SK-N-SH (cell line): ENCODE measurements at regions of chr20 and their contacts with region 1.

Region 1: GRCh38 chr20:35463455-35464300 is 8.3 kb downstream of the CEP250 start:
- DNase-seq: peak; percentile 65
- H3K4me3 ChIP-seq: no peak overlapping the region; a peak in 1 of 4 replicates
- H3K27ac ChIP-seq: no peak overlapping the region
- H3K4me1 ChIP-seq: peaks cover 0 to under 1% of the 10 kb centered on the region in 2 experiments; a peak in 3 of 4 replicates
- H3K27me3 ChIP-seq: no peaks in the 10 kb centered on the region
- CTCF ChIP-seq: peak; percentile 82
- EP300 ChIP-seq: no peak
- RAD21 ChIP-seq: peak; percentile 81

Region 2: GRCh38 chr20:35447082-35447789 is 16.4 kb before region 1 on chr20:
- CTCF ChIA-PET with region 1: interaction called, 31 read pairs
- POLR2A ChIA-PET with region 1: no interaction called
- DNase-seq: peak; percentile 74
- H3K4me3 ChIP-seq: peak overlapping the region in 1 of 2 experiments; percentile 44; a peak in 1 of 4 replicates
- H3K27ac ChIP-seq: no peak overlapping the region
- H3K4me1 ChIP-seq: peaks cover 4 to 11% of the 10 kb centered on the region in 2 experiments; a peak in 3 of 4 replicates
- H3K27me3 ChIP-seq: no peaks in the 10 kb centered on the region
- CTCF ChIP-seq: peak; percentile 92
- EP300 ChIP-seq: no peak
- RAD21 ChIP-seq: peak; percentile 69

Region 3: GRCh38 chr20:35474303-35474871 is 10.7 kb after region 1 on chr20:
- CTCF ChIA-PET with region 1: interaction called, 32 read pairs
- POLR2A ChIA-PET with region 1: no interaction called
- DNase-seq: no peak
- H3K4me3 ChIP-seq: no peak overlapping the region
- H3K27ac ChIP-seq: no peak overlapping the region
- H3K4me1 ChIP-seq: no peaks in the 10 kb centered on the region
- H3K27me3 ChIP-seq: no peaks in the 10 kb centered on the region
- CTCF ChIP-seq: no peak
- EP300 ChIP-seq: no peak
- RAD21 ChIP-seq: no peak

Region 4: GRCh38 chr20:35487479-35487878 is 23.8 kb after region 1 on chr20:
- CTCF ChIA-PET with region 1: interaction called, 11 read pairs
- POLR2A ChIA-PET with region 1: no interaction called
- DNase-seq: no peak
- H3K4me3 ChIP-seq: no peak overlapping the region
- H3K27ac ChIP-seq: no peak overlapping the region
- H3K4me1 ChIP-seq: no peaks in the 10 kb centered on the region
- H3K27me3 ChIP-seq: no peaks in the 10 kb centered on the region
- CTCF ChIP-seq: no peak
- EP300 ChIP-seq: no peak
- RAD21 ChIP-seq: no peak

Region 5: GRCh38 chr20:35497780-35498189 is 34.1 kb after region 1 on chr20:
- CTCF ChIA-PET with region 1: interaction called, 12 read pairs
- POLR2A ChIA-PET with region 1: no interaction called
- DNase-seq: no peak
- H3K4me3 ChIP-seq: no peak overlapping the region
- H3K27ac ChIP-seq: no peak overlapping the region
- H3K4me1 ChIP-seq: no peaks in the 10 kb centered on the region
- H3K27me3 ChIP-seq: no peaks in the 10 kb centered on the region
- CTCF ChIP-seq: no peak
- EP300 ChIP-seq: no peak
- RAD21 ChIP-seq: no peak